CD4-positive, alpha-beta T cell (primary cell): ENCODE measurements at regions of chr15 and their contacts with region 1.

Region 1: DNA sequence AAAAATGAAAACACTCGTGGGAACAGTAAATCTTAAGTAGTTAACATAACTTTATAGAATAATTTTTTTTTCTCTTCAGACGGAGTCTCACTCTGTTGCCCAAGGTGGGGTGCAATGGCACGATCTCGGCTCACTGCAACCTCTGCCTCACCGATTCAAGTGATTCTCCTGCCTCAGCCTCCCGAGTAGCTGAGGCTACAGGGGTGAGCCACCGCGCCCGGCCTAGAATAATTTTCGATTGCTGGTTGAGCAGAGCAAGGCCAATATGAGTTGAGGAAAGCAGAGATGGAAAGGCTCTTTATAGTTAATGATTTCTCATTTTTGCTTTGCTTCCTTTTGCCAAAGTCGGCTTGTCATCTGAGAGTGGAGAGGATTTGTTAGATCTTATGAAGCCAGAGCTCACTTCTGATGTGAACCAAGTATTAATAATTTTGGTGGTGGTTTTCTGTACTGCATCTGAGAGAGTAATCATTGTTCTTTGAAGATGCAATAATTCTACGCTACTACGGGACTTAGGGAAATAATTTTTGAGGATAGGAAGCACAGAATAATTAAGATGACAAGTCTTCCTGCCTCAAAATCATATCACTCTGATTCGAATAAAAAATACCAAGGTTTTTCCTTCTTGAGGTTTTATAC is 1.6 kb upstream of the GOLM2 start:
- DNase-seq: peak in 2 of 14 experiments; percentile 23 to 32
- ATAC-seq: no peak
- H3K4me3 ChIP-seq: peak overlapping the region; percentile 78
- H3K4me3 Mint-ChIP-seq: peak overlapping the region; percentile 98
- H3K27ac ChIP-seq: peak overlapping the region; percentile 95
- H3K27ac Mint-ChIP-seq: peak overlapping the region; percentile 99
- H3K4me1 ChIP-seq: peaks cover 16% of the 10 kb centered on the region
- H3K4me1 Mint-ChIP-seq: peaks cover 51% of the 10 kb centered on the region
- H3K27me3 ChIP-seq: no peaks in the 10 kb centered on the region
- H3K27me3 Mint-ChIP-seq: peaks cover 8% of the 10 kb centered on the region
- CTCF ChIP-seq: peak; percentile 27

Region 2: DNA sequence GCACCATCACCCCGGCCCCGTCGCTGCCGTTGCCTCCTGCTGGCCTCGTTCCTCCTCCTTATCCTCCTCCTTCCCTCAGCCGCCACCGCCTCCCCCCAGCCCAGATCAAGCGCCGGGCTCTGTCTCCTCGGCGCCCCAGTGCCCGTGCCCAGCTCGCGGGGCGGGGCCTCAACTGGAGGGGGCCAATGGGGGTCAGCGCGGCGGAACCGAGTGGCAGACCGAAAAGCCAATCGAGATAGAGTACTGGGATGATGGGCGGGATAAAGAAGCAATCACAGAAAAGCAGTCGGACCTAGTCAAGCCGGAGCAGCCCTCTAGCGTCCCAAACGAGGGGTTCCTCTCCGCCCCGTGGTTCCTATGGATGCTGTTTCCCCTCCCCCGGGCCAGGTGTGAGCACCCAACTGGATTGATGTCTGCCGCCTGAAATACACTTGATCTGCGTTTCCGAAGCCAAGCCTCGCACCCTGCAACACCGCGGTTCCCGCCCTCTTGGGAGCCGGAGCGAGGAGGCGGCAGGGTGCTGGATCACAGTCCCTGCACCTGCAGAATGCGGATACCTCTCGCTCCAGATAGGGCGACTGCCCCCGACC is 91.7 kb before region 1 on chr15 and contains the start of gene FRMD5:
- CTCF ChIA-PET with region 1: interaction called, 3 read pairs
- POLR2A ChIA-PET with region 1: interaction called, 10 read pairs
- intact Hi-C with region 1: loop called in 1 of 2 experiments (anchors 5 kb)
- DNase-seq: peak; percentile 74 to 92 (median 85)
- ATAC-seq: peak; percentile 96
- H3K4me3 ChIP-seq: peak within 1 kb of the TSS; percentile 57
- H3K4me3 Mint-ChIP-seq: peak within 1 kb of the TSS; percentile 90
- H3K27ac ChIP-seq: no peak within 1 kb of the TSS
- H3K27ac Mint-ChIP-seq: peak within 1 kb of the TSS; percentile 22
- H3K4me1 ChIP-seq: peaks cover 21% of the 10 kb centered on the region
- H3K4me1 Mint-ChIP-seq: peaks cover 22% of the 10 kb centered on the region
- H3K27me3 ChIP-seq: peaks cover 26 to 45% of the 10 kb centered on the region in 2 experiments
- H3K27me3 Mint-ChIP-seq: peaks cover 86% of the 10 kb centered on the region
- CTCF ChIP-seq: no peak
- total RNA-seq, gene FRMD5: not detected

Region 3: GRCh38 chr15:44265757-44266156 is 21.2 kb before region 1 on chr15:
- CTCF ChIA-PET with region 1: no interaction called
- POLR2A ChIA-PET with region 1: interaction called, 11 read pairs
- intact Hi-C with region 1: no loop called
- DNase-seq: peak in 2 of 14 experiments; percentile 5 to 17
- ATAC-seq: no peak
- H3K4me3 ChIP-seq: no peak overlapping the region
- H3K4me3 Mint-ChIP-seq: no peak overlapping the region
- H3K27ac ChIP-seq: no peak overlapping the region
- H3K27ac Mint-ChIP-seq: no peak overlapping the region
- H3K4me1 ChIP-seq: no peaks in the 10 kb centered on the region
- H3K4me1 Mint-ChIP-seq: no peaks in the 10 kb centered on the region
- H3K27me3 ChIP-seq: no peaks in the 10 kb centered on the region
- H3K27me3 Mint-ChIP-seq: no peaks in the 10 kb centered on the region
- CTCF ChIP-seq: no peak

Region 4: GRCh38 chr15:44300572-44300971 is 13.6 kb after region 1 on chr15:
- CTCF ChIA-PET with region 1: interaction called, 5 read pairs
- POLR2A ChIA-PET with region 1: interaction called, 14 read pairs
- intact Hi-C with region 1: no loop called
- DNase-seq: no peak
- ATAC-seq: no peak
- H3K4me3 ChIP-seq: no peak overlapping the region
- H3K4me3 Mint-ChIP-seq: no peak overlapping the region
- H3K27ac ChIP-seq: no peak overlapping the region
- H3K27ac Mint-ChIP-seq: no peak overlapping the region
- H3K4me1 ChIP-seq: peaks cover 7% of the 10 kb centered on the region
- H3K4me1 Mint-ChIP-seq: peaks cover 53% of the 10 kb centered on the region
- H3K27me3 ChIP-seq: no peaks in the 10 kb centered on the region
- H3K27me3 Mint-ChIP-seq: no peaks in the 10 kb centered on the region
- CTCF ChIP-seq: no peak

Region 5: GRCh38 chr15:44536962-44537734 is 250.2 kb after region 1 on chr15 and contains the start of gene EIF3J:
- CTCF ChIA-PET with region 1: no interaction called
- POLR2A ChIA-PET with region 1: interaction called, 11 read pairs
- intact Hi-C with region 1: loop called in 1 of 2 experiments (anchors 5 kb)
- DNase-seq: peak; percentile 86 to 99 (median 94)
- ATAC-seq: peak; percentile 89
- H3K4me3 ChIP-seq: peak within 1 kb of the TSS; percentile 68
- H3K4me3 Mint-ChIP-seq: peak within 1 kb of the TSS; percentile 92
- H3K27ac ChIP-seq: peak within 1 kb of the TSS; percentile 86 to 97
- H3K27ac Mint-ChIP-seq: peak within 1 kb of the TSS; percentile 91
- H3K4me1 ChIP-seq: peaks cover 42% of the 10 kb centered on the region
- H3K4me1 Mint-ChIP-seq: peaks cover 59% of the 10 kb centered on the region
- H3K27me3 ChIP-seq: no peaks in the 10 kb centered on the region
- H3K27me3 Mint-ChIP-seq: no peaks in the 10 kb centered on the region
- CTCF ChIP-seq: no peak
- total RNA-seq, gene EIF3J: 67.6 to 69.2 TPM